Activated CD8-positive, alpha-beta memory T cell treated with anti-CD3 and anti-CD28 coated beads, Interleukin-2, amount 10 ng/mL, durations not matched to agents 7 days and 5 days (primary cell): ENCODE measurements at regions of chr17 and their contacts with region 1.

Region 1: GRCh38 chr17:34361478-34362061 is 1.5 kb downstream of the CCL1 start:
- DNase-seq: peak; percentile 91
- ATAC-seq: peak; percentile 92
- H3K4me3 Mint-ChIP-seq: no peak overlapping the region
- H3K27ac Mint-ChIP-seq: no peak overlapping the region
- H3K4me1 Mint-ChIP-seq: peaks cover 59% of the 10 kb centered on the region
- H3K27me3 Mint-ChIP-seq: peaks cover 51% of the 10 kb centered on the region

Region 2: DNA sequence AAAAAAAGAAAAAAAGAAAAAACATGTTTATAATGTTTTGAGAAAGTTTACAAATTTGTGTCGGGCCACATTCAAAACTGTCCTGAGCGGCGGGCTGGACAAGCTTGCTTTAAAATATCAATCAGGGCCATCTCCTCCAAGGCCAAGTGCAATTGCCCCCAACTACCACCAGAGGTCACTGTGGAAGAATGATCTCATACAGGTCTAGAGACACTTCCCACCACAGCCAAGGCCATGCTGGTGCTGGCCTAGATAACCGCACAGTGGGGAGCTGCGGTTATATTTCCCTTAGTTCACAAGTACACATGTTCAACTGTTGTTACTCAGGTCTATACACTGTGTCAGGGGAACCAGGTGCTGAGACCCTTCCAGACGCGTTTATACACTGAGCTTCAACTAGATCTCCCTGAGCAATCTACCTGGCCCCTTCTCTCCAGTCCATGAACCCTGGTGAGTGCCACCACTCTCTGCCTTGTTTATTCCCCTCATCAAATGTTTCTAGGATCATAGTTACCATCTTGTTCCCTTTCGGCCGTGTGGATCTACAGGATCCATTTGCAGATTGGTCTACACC is 190.2 kb before region 1 on chr17:
- CTCF ChIA-PET with region 1: interaction called, 49 read pairs
- DNase-seq: peak; percentile 80
- ATAC-seq: peak; percentile 68
- H3K4me3 Mint-ChIP-seq: no peak overlapping the region
- H3K27ac Mint-ChIP-seq: no peak overlapping the region
- H3K4me1 Mint-ChIP-seq: peaks cover 4% of the 10 kb centered on the region
- H3K27me3 Mint-ChIP-seq: peaks cover 19% of the 10 kb centered on the region

Region 3: DNA sequence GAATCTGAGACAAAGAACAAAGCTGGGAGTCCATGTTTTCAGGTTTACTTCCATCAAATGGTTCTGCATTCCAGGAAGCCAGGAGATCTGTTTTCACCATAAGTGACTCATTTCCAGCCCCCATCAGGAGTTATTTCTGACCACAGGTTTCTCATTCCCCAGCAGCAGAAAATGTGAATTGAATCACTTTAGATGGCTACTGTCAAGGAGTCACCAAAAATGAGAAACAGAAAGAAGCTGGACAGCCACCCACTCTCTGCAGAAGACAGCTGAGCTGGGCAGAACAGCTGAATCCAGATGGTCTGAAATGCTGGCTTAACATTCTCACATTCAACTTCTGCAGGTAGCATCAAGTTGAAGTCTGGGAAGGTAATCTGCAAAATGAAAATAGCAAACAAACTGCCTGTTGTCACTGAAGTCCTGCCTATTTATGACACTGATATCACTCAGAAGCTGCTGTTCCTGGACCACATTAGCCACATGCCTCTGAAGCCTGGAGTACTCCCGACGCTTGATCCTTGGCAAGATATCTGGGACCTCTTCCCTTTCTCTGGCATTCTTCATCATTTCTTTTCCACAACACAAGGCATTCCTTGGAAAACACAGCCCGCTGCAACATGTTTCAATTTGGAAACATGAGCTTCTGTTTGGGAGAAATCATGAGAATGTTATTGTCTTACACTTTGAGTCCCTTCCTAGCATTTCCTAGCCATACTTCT is 60.8 kb before region 1 on chr17:
- CTCF ChIA-PET with region 1: interaction called, 13 read pairs
- DNase-seq: peak; percentile 46
- ATAC-seq: peak; percentile 33
- H3K4me3 Mint-ChIP-seq: no peak overlapping the region
- H3K27ac Mint-ChIP-seq: no peak overlapping the region
- H3K4me1 Mint-ChIP-seq: peaks cover 24% of the 10 kb centered on the region
- H3K27me3 Mint-ChIP-seq: peaks cover 40% of the 10 kb centered on the region

Region 4: DNA sequence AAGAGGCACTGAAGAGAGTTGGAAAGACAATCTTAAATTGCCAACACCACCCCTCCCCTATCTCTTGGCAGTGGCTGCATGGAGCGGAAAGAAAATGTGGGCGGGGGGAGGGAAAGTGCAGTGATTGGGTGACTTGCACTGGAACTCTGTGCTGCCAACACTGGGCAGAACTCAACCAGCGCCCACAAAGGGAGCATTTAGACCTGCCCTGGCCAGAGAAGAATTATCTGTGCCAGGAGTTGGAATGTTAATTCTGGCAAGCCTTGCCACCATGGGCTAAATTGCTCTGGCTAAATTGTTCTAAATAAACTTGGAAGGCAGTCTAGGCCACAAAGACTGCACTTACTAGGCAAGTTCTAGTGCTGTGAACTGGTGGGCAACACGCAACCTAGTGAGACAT is 11.8 kb before region 1 on chr17:
- CTCF ChIA-PET with region 1: interaction called, 16 read pairs
- DNase-seq: no peak
- ATAC-seq: no peak
- H3K4me3 Mint-ChIP-seq: no peak overlapping the region
- H3K27ac Mint-ChIP-seq: no peak overlapping the region
- H3K4me1 Mint-ChIP-seq: no peaks in the 10 kb centered on the region
- H3K27me3 Mint-ChIP-seq: peaks cover 75% of the 10 kb centered on the region

Region 5: DNA sequence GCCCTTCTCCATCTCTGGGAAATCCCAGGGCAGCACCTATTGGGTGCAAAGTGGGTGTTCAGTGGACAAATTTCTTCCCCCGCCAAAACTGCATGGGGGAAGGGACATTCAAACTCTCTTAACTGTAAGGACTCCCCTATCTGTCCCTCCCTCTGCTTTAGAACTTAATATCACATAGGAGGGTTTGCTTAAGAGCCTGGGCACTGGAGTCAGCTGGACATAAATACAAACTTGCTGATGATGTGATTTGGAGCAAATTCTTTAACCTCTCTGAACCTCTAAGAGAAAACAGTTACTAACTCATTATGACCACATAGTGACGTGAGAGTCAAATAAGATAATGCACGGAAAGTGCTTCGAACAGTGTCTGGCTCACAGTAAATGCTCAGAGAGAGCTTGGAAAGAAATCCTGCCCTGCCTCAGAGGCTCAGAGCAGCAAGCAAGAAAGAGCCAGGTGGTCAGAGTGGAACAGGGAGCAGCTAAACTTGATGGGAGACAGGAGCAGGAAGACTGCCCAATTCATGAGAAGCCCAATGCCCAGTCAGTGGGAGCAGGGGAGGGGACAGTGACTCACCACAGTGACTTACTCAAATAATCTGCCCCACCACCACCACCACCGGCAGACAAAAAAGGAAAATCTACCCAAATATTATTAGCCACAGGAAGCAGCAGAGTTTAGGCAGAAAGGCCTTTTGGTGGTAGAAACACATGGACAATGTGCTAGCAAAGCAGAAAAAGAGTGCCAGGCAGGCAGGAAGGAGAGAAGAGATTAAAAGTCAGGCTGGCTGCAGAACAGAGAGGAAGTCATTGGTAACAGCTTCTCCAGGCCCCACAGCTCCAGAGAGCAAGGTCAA is 25.4 kb after region 1 on chr17:
- CTCF ChIA-PET with region 1: interaction called, 92 read pairs
- DNase-seq: peak; percentile 55
- ATAC-seq: peak; percentile 10
- H3K4me3 Mint-ChIP-seq: no peak overlapping the region
- H3K27ac Mint-ChIP-seq: peak overlapping the region; percentile 70
- H3K4me1 Mint-ChIP-seq: peaks cover 83% of the 10 kb centered on the region
- H3K27me3 Mint-ChIP-seq: peaks cover 3% of the 10 kb centered on the region

Region 6: GRCh38 chr17:34398990-34399389 is 37.4 kb after region 1 on chr17:
- CTCF ChIA-PET with region 1: interaction called, 60 read pairs
- DNase-seq: no peak
- ATAC-seq: peak; percentile 91
- H3K4me3 Mint-ChIP-seq: no peak overlapping the region
- H3K27ac Mint-ChIP-seq: peak overlapping the region; percentile 81
- H3K4me1 Mint-ChIP-seq: peaks cover 44% of the 10 kb centered on the region
- H3K27me3 Mint-ChIP-seq: peaks cover 5% of the 10 kb centered on the region

Region 7: DNA sequence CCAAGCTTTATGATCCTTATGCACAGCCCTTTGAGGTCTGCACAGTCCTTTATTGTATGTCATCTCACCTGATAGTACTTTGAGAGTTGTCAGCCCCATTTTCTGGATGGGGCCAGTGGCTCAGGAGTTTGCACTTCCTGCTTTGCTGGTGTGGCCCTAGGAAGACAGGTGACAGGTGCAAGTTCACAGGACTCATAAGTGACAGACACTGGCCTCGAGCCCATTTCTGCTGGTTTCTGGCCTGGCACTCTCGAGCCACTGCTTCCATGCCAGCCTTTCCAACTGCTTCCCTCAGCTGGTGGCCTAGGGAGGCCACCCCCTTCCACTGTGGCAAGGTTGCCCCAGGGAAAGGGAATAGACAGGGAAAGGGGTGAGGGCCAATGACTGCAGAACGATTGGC is 85.8 kb after region 1 on chr17:
- CTCF ChIA-PET with region 1: no interaction called
- DNase-seq: no peak
- ATAC-seq: no peak
- H3K4me3 Mint-ChIP-seq: no peak overlapping the region
- H3K27ac Mint-ChIP-seq: no peak overlapping the region
- H3K4me1 Mint-ChIP-seq: no peaks in the 10 kb centered on the region
- H3K27me3 Mint-ChIP-seq: peaks cover 51% of the 10 kb centered on the region